Mammary epithelial cell (primary cell): ENCODE measurements at regions of chr1 and their contacts with region 1.

Region 1: DNA sequence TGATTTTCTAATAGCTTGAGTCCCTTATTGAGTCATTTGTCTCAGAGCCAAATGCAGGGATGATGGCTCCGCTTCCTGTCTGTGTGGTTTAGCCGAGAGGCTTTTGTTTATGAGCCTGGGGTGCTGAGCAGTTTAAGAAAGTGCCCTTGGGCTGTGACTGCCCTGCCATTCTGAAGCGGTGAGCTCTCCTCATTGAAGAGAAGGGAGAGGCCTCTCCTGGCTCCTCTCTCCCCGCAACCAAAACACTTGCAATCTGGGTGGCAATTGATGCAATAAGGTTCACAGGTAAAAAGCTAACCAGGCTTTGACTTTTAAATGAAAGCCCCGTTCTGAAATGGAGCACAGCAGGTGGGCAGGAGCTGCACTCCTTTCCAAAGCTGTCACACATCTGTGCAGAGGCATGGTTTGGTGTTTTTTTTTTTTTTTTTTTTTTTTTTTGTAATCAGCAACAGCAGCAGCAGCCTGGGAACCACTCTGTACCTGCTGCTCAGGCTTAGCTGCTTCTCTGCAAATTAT is 403.7 kb downstream of the SIPA1L2 start:
- DNase-seq: peak; percentile 73
- H3K4me3 ChIP-seq: no peak overlapping the region
- H3K27ac ChIP-seq: no peak overlapping the region
- H3K4me1 ChIP-seq: peaks cover 34% of the 10 kb centered on the region
- H3K27me3 ChIP-seq: no peaks in the 10 kb centered on the region
- CTCF ChIP-seq: no peak

Region 2: GRCh38 chr1:232038706-232039677 is 187.3 kb before region 1 on chr1:
- CTCF ChIA-PET with region 1: no interaction called
- dilution Hi-C with region 1: no loop called
- in situ Hi-C with region 1: no loop called
- intact Hi-C with region 1: no loop called
- DNase-seq: peak; percentile 56
- H3K4me3 ChIP-seq: no peak overlapping the region
- H3K27ac ChIP-seq: no peak overlapping the region
- H3K4me1 ChIP-seq: no peaks in the 10 kb centered on the region
- H3K27me3 ChIP-seq: no peaks in the 10 kb centered on the region
- CTCF ChIP-seq: no peak

Region 3: GRCh38 chr1:232142403-232143314 is 83.6 kb before region 1 on chr1:
- CTCF ChIA-PET with region 1: no interaction called
- dilution Hi-C with region 1: no loop called
- in situ Hi-C with region 1: no loop called
- intact Hi-C with region 1: loop called (anchors 5 kb)
- DNase-seq: peak; percentile 94
- H3K4me3 ChIP-seq: no peak overlapping the region
- H3K27ac ChIP-seq: peak overlapping the region; percentile 88
- H3K4me1 ChIP-seq: peaks cover 15% of the 10 kb centered on the region
- H3K27me3 ChIP-seq: no peaks in the 10 kb centered on the region
- CTCF ChIP-seq: no peak

Region 4: GRCh38 chr1:232319072-232319471 is 92.8 kb after region 1 on chr1:
- CTCF ChIA-PET with region 1: interaction called, 4 read pairs
- dilution Hi-C with region 1: loop called (anchors 5 kb)
- in situ Hi-C with region 1: no loop called
- intact Hi-C with region 1: no loop called
- DNase-seq: peak; percentile 71
- H3K4me3 ChIP-seq: no peak overlapping the region
- H3K27ac ChIP-seq: no peak overlapping the region
- H3K4me1 ChIP-seq: peaks cover 11% of the 10 kb centered on the region
- H3K27me3 ChIP-seq: peaks cover 2% of the 10 kb centered on the region
- CTCF ChIP-seq: no peak

Region 5: GRCh38 chr1:232334246-232335210 is 108.3 kb after region 1 on chr1:
- CTCF ChIA-PET with region 1: no interaction called
- dilution Hi-C with region 1: no loop called
- in situ Hi-C with region 1: no loop called
- intact Hi-C with region 1: loop called (anchors 1 kb)
- DNase-seq: peak; percentile 91
- H3K4me3 ChIP-seq: no peak overlapping the region
- H3K27ac ChIP-seq: no peak overlapping the region
- H3K4me1 ChIP-seq: peaks cover 11% of the 10 kb centered on the region
- H3K27me3 ChIP-seq: peaks cover 3% of the 10 kb centered on the region
- CTCF ChIP-seq: no peak